HepG2 (cell line): ENCODE measurements at regions of chr12 and their contacts with region 1.

Region 1: GRCh38 chr12:96489103-96490056 is at the start of gene CFAP54:
- DNase-seq: peak; percentile 83
- ATAC-seq: peak; percentile 99
- H3K4me3 ChIP-seq: peak within 1 kb of the TSS; percentile 64 to 76 (median 69)
- H3K27ac ChIP-seq: no peak within 1 kb of the TSS
- H3K4me1 ChIP-seq: peaks cover 11% of the 10 kb centered on the region; the same call in 1 of the 2 replicates
- H3K27me3 ChIP-seq: no peaks in the 10 kb centered on the region
- CTCF ChIP-seq: peak; percentile 96
- EP300 ChIP-seq: 0 out of 4 replicates have a peak, but pooled peaks of 1 of the 2 experiments have one; percentile 30
- POLR2A ChIP-seq: no peak
- RAD21 ChIP-seq: peak; percentile 81
- total RNA-seq, gene CFAP54: not detected in 2 replicates

Region 2: GRCh38 chr12:95815635-95816212 is 673.7 kb before region 1 on chr12:
- CTCF ChIA-PET with region 1: no interaction called
- POLR2A ChIA-PET with region 1: no interaction called
- in situ Hi-C with region 1: no loop called
- intact Hi-C with region 1: no loop called
- DNase-seq: peak; percentile 36
- ATAC-seq: peak; percentile 48; the same call in 1 of the 3 replicates
- H3K4me3 ChIP-seq: no peak overlapping the region
- H3K27ac ChIP-seq: no peak overlapping the region
- H3K4me1 ChIP-seq: peaks cover 10% of the 10 kb centered on the region; the same call in 1 of the 2 replicates
- H3K27me3 ChIP-seq: no peaks in the 10 kb centered on the region
- CTCF ChIP-seq: peak; percentile 80
- EP300 ChIP-seq: no peak
- POLR2A ChIP-seq: no peak
- RAD21 ChIP-seq: peak; percentile 75; the same call in 1 of the 2 replicates

Region 3: GRCh38 chr12:96409731-96410130 is 79.6 kb before region 1 on chr12:
- CTCF ChIA-PET with region 1: no interaction called
- POLR2A ChIA-PET with region 1: no interaction called
- in situ Hi-C with region 1: no loop called
- intact Hi-C with region 1: loop called (anchors 5 kb)
- DNase-seq: no peak
- ATAC-seq: no peak
- H3K4me3 ChIP-seq: no peak overlapping the region
- H3K27ac ChIP-seq: no peak overlapping the region
- H3K4me1 ChIP-seq: peaks cover 1% of the 10 kb centered on the region; the same call in 1 of the 2 replicates
- H3K27me3 ChIP-seq: peaks cover 0 to 5% of the 10 kb centered on the region in 2 experiments; a peak in 1 of 5 replicates
- CTCF ChIP-seq: no peak
- EP300 ChIP-seq: no peak
- POLR2A ChIP-seq: no peak
- RAD21 ChIP-seq: no peak

Region 4: GRCh38 chr12:96445691-96446583 is 43.4 kb before region 1 on chr12:
- CTCF ChIA-PET with region 1: no interaction called
- POLR2A ChIA-PET with region 1: no interaction called
- in situ Hi-C with region 1: no loop called
- intact Hi-C with region 1: no loop called
- DNase-seq: no peak
- ATAC-seq: no peak
- H3K4me3 ChIP-seq: no peak overlapping the region
- H3K27ac ChIP-seq: no peak overlapping the region
- H3K4me1 ChIP-seq: no peaks in the 10 kb centered on the region
- H3K27me3 ChIP-seq: no peaks in the 10 kb centered on the region; a peak in 1 of 5 replicates
- CTCF ChIP-seq: no peak
- EP300 ChIP-seq: no peak
- POLR2A ChIP-seq: no peak
- RAD21 ChIP-seq: no peak